Activated CD8-positive, alpha-beta T cell treated with anti-CD3 and anti-CD28 coated beads, Interleukin-2, amount 10 ng/mL, durations not matched to agents 7 days and 5 days (primary cell): ENCODE measurements at regions of chr17 and their contacts with region 1.

Region 1: DNA sequence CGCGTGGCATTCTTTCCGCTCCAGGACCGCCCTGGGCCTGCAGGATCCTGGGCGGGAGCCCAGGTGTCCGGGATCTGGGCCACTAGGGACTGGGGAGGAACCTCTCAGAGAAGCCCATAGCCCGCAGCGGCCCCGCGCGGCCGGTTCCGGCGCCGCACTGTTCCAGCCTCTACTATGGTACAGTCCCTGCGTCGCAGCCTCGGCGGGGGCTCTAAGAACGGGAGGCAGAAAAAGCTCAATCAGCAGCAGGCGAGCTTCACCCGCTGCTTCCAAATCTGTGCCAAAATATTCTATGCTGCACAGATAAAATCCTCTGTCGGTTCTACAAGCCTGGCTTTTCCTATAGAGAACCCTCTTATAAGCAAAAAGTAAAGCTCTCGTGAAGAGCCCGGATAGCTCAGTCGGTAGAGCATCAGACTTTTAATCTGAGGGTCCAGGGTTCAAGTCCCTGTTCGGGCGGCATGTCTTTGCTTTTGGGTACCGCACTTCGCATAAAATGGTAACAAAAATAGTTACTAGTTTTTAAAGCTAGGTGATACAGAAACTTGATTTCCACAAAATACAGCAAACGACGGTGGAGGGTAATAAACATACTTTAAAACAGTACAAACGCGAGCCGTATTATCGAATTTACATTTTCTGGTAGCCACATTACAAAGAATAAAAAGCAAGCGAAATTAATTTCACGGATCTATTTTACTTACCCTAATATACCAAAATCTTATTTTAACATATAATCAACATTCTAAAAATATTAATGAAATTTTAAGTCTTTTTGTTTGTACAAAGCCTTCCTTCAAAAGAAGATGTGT is 661 bp upstream of the ALOXE3 start:
- DNase-seq: peak; percentile 90
- ATAC-seq: peak; percentile 70
- H3K4me3 Mint-ChIP-seq: peak overlapping the region; percentile 89
- H3K27ac Mint-ChIP-seq: peak overlapping the region; percentile 95
- H3K4me1 Mint-ChIP-seq: peaks cover 51% of the 10 kb centered on the region
- H3K27me3 Mint-ChIP-seq: peaks cover 57% of the 10 kb centered on the region

Region 2: GRCh38 chr17:7972131-7972785 is 146.7 kb before region 1 on chr17:
- CTCF ChIA-PET with region 1: no interaction called
- POLR2A ChIA-PET with region 1: no interaction called
- DNase-seq: no peak
- ATAC-seq: no peak
- H3K4me3 Mint-ChIP-seq: no peak overlapping the region
- H3K27ac Mint-ChIP-seq: no peak overlapping the region
- H3K4me1 Mint-ChIP-seq: no peaks in the 10 kb centered on the region
- H3K27me3 Mint-ChIP-seq: peaks cover 17% of the 10 kb centered on the region

Region 3: GRCh38 chr17:8073627-8074484 is 45.1 kb before region 1 on chr17:
- CTCF ChIA-PET with region 1: interaction called, 50 read pairs
- POLR2A ChIA-PET with region 1: no interaction called
- DNase-seq: peak; percentile 87
- ATAC-seq: peak; percentile 87
- H3K4me3 Mint-ChIP-seq: peak overlapping the region; percentile 54
- H3K27ac Mint-ChIP-seq: no peak overlapping the region
- H3K4me1 Mint-ChIP-seq: peaks cover 22% of the 10 kb centered on the region
- H3K27me3 Mint-ChIP-seq: peaks cover 52% of the 10 kb centered on the region

Region 4: GRCh38 chr17:8103549-8103948 is 15.4 kb before region 1 on chr17:
- CTCF ChIA-PET with region 1: interaction called, 53 read pairs
- POLR2A ChIA-PET with region 1: interaction called, 4 read pairs
- DNase-seq: no peak
- ATAC-seq: no peak
- H3K4me3 Mint-ChIP-seq: no peak overlapping the region
- H3K27ac Mint-ChIP-seq: no peak overlapping the region
- H3K4me1 Mint-ChIP-seq: peaks cover 6% of the 10 kb centered on the region
- H3K27me3 Mint-ChIP-seq: peaks cover 8% of the 10 kb centered on the region

Region 5: GRCh38 chr17:8156246-8156992 is 37.4 kb after region 1 on chr17:
- CTCF ChIA-PET with region 1: interaction called, 72 read pairs
- POLR2A ChIA-PET with region 1: interaction called, 20 read pairs
- DNase-seq: peak; percentile 100
- ATAC-seq: peak; percentile 82
- H3K4me3 Mint-ChIP-seq: no peak overlapping the region
- H3K27ac Mint-ChIP-seq: no peak overlapping the region
- H3K4me1 Mint-ChIP-seq: peaks cover 36% of the 10 kb centered on the region
- H3K27me3 Mint-ChIP-seq: no peaks in the 10 kb centered on the region

Region 6: GRCh38 chr17:8189711-8190477 is 70.9 kb after region 1 on chr17 and contains the start of gene BORCS6:
- CTCF ChIA-PET with region 1: interaction called, 34 read pairs
- POLR2A ChIA-PET with region 1: interaction called, 5 read pairs
- DNase-seq: peak; percentile 98
- ATAC-seq: peak; percentile 68
- H3K4me3 Mint-ChIP-seq: no peak within 1 kb of the TSS
- H3K27ac Mint-ChIP-seq: peak within 1 kb of the TSS; percentile 93
- H3K4me1 Mint-ChIP-seq: peaks cover 11% of the 10 kb centered on the region
- H3K27me3 Mint-ChIP-seq: no peaks in the 10 kb centered on the region
- total RNA-seq, gene BORCS6: 12.7 TPM

Region 7: DNA sequence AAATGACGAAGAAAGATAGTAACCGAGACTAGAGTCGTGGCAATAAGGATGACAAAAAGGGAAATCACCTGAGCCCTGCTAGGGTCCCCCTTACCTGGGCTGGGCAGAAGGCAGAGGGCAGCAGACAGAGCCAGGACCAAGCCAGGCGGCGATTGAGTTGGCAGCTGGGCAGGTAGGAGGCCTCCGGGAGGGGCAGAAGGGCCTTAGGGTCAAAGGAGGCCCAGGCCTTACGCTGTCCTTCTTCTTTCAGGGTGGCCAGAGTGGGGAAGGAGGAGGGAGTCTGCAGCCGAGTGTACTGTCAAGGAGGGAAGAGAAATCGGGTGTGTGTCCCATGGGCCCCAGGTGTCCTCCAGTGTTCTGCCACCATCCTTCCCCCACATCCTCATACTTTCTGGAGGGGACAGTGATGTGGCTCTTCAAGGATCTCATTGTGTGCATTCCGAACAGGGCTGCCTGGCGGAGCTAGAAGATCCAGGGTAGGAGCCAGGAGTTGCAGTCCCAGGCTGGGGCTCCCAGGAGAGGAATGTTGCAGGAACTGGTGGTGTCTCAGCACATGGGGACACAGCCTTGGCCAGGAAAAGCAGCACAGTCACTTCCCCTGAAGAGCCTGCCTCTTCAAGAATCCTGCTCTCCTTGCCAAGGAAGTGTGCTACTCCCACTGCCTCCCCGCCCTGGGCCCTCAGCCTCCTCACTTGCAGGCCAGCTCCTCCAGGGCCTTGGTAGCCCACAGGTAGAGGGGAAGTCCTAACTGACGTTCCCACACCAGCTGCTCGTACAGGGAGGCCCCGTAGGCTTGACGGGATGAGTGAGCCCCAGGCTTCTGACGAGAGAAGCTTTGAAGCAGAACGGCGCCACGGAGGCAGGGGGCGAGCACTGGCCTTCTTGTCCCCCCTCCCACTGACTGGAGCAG is 115.6 kb after region 1 on chr17:
- CTCF ChIA-PET with region 1: no interaction called
- POLR2A ChIA-PET with region 1: no interaction called
- DNase-seq: no peak
- ATAC-seq: no peak
- H3K4me3 Mint-ChIP-seq: no peak overlapping the region
- H3K27ac Mint-ChIP-seq: no peak overlapping the region
- H3K4me1 Mint-ChIP-seq: peaks cover 3% of the 10 kb centered on the region
- H3K27me3 Mint-ChIP-seq: no peaks in the 10 kb centered on the region

Region 8: DNA sequence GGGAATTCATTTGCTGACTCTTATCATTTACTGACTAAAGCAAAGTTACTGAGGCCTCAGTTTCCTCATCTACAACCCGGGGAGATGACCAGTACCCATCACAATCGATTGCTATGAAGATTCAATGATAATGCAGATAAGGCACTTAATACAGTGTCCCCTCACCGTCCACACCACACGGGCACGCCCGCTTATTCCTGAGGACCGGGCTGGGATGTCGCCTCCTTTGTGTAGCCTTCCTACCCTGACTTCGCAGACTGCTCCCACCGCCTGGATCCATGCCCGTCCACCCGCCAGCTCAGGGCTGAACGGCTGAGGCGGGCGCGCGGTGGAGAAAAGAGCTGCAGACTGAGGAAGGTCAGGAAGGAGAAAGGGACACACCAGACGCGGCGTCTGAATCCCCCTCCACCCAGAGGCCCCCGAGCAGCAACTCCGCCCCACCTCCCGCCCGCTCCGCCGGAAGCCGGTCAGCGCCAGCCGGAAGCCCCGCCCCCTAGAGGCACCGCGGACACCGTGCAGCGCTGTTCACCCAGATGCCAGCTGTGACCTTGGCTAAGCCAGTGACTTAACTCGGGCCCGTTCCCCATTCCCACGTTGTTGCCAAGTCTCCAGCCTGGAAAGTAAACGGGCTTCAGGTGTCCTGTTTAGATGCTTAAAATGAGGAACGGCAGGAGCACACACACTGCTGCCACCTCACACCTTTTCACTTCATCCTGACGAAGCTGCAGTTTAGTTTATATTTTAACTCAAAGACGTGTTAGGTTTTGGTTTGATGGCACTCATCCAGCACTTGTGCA is 257.5 kb after region 1 on chr17 and contains the start of gene KRABD2:
- CTCF ChIA-PET with region 1: interaction called, 13 read pairs
- POLR2A ChIA-PET with region 1: no interaction called
- DNase-seq: peak; percentile 94
- ATAC-seq: peak; percentile 97
- H3K4me3 Mint-ChIP-seq: peak within 1 kb of the TSS; percentile 90
- H3K27ac Mint-ChIP-seq: peak within 1 kb of the TSS; percentile 78
- H3K4me1 Mint-ChIP-seq: peaks cover 61% of the 10 kb centered on the region
- H3K27me3 Mint-ChIP-seq: no peaks in the 10 kb centered on the region